Activated T-helper 1 cell treated with anti-CD3 and anti-CD28 coated beads, Interleukin-12 subunit alpha, Interleukin-12 subunit beta, Interleukin-2, Interleukin-4 antibody, amounts not matched to agents 30 ng/mL and 10 ng/mL and 1 ng/mL, durations not matched to agents 14 hours and 24 hours and 36 hours (primary cell): ENCODE measurements at regions of chr1 and their contacts with region 1.

Region 1: GRCh38 chr1:64242895-64243756 is 39.7 kb downstream of the UBE2U start:
- DNase-seq: no peak
- H3K4me3 Mint-ChIP-seq: peak overlapping the region; percentile 40
- H3K27ac Mint-ChIP-seq: no peak overlapping the region
- H3K4me1 Mint-ChIP-seq: peaks cover 11% of the 10 kb centered on the region
- H3K27me3 Mint-ChIP-seq: peaks cover 11% of the 10 kb centered on the region

Region 2: GRCh38 chr1:62841587-62842169 is 1401.4 kb before region 1 on chr1:
- intact Hi-C with region 1: loop called (anchors 2 kb)
- DNase-seq: no peak
- H3K4me3 Mint-ChIP-seq: no peak overlapping the region
- H3K27ac Mint-ChIP-seq: no peak overlapping the region
- H3K4me1 Mint-ChIP-seq: no peaks in the 10 kb centered on the region
- H3K27me3 Mint-ChIP-seq: no peaks in the 10 kb centered on the region

Region 3: GRCh38 chr1:63557365-63557987 is 685.6 kb before region 1 on chr1:
- intact Hi-C with region 1: loop called (anchors 1 kb)
- DNase-seq: no peak
- H3K4me3 Mint-ChIP-seq: no peak overlapping the region
- H3K27ac Mint-ChIP-seq: no peak overlapping the region
- H3K4me1 Mint-ChIP-seq: no peaks in the 10 kb centered on the region
- H3K27me3 Mint-ChIP-seq: no peaks in the 10 kb centered on the region

Region 4: DNA sequence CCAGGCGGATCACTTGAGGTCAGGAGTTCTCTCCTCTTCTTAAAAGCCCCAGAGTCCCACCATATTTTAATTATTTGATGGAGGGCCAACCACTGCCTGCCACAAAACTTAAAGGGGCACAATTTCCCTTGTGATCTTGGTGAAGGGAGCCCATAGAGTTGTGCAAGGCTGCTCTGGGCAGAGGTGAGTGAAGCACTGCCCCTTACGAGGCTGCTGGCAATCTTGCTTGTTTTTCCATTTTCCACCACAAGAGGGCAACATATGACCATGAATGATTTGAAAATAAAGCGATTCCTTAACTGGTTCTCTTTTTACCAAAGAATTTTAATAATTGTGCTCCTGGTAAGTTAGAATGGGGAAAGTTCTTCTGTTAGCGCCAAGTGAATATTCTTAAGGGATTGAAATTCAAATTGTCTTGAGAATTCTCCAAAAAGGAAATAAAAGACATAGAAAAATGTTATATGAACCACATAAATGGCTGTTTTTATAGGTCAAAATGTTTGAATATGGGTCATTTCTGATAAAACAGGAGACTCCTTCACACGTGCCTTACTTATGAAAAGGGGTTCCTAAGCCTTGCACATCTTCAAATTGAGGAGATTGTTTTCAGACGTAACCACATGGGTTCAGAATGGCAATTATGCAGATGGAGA is 627.2 kb before region 1 on chr1:
- intact Hi-C with region 1: loop called (anchors 1 kb)
- DNase-seq: peak; percentile 53
- H3K4me3 Mint-ChIP-seq: no peak overlapping the region
- H3K27ac Mint-ChIP-seq: no peak overlapping the region
- H3K4me1 Mint-ChIP-seq: peaks cover 3% of the 10 kb centered on the region
- H3K27me3 Mint-ChIP-seq: no peaks in the 10 kb centered on the region

Region 5: DNA sequence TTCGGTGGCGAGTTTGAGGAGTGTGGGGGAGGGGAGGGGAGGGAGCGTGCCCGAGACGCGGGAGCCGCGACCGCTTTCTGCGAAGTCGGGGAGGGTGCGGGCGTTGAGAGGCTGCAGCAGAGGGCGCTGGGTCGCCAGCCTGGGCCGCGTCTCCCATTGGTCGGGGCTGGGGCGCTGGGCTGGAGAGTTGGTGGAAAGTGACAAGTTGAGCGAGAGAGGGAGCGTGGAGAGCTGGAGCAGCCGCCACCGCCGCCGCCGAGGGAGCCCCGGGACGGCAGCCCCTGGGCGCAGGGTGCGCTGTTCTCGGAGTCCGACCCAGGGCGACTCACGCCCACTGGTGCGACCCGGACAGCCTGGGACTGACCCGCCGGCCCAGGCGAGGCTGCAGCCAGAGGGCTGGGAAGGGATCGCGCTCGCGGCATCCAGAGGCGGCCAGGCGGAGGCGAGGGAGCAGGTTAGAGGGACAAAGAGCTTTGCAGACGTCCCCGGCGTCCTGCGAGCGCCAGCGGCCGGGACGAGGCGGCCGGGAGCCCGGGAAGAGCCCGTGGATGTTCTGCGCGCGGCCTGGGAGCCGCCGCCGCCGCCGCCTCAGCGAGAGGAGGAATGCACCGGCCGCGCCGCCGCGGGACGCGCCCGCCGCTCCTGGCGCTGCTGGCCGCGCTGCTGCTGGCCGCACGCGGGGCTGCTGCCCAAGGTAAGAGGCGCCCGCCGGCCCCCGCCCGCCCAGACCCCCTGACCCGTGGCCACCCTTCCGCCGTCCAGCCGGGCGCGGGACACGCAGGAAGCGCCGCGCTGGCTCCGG is 469.1 kb before region 1 on chr1 and contains the start of gene ROR1:
- intact Hi-C with region 1: loop called (anchors 10 kb)
- DNase-seq: peak; percentile 43
- H3K4me3 Mint-ChIP-seq: peak within 1 kb of the TSS; percentile 85
- H3K27ac Mint-ChIP-seq: peak within 1 kb of the TSS; percentile 53
- H3K4me1 Mint-ChIP-seq: peaks cover 22% of the 10 kb centered on the region
- H3K27me3 Mint-ChIP-seq: peaks cover 62% of the 10 kb centered on the region
- total RNA-seq, gene ROR1: 0.05 TPM in 1 of 2 replicates, not detected in the other

Region 6: GRCh38 chr1:64062941-64063581 is 180.1 kb before region 1 on chr1:
- intact Hi-C with region 1: no loop called
- DNase-seq: no peak
- H3K4me3 Mint-ChIP-seq: no peak overlapping the region
- H3K27ac Mint-ChIP-seq: no peak overlapping the region
- H3K4me1 Mint-ChIP-seq: peaks cover 15% of the 10 kb centered on the region
- H3K27me3 Mint-ChIP-seq: no peaks in the 10 kb centered on the region